Ascending aorta (tissue), 2 donors: ENCODE measurements at regions of chr16 and their contacts with region 1.

Region 1: GRCh38 chr16:88785106-88785924 is at the start of gene PIEZO1:
- DNase-seq: peak in 1 of 2 donors; percentile 88
- H3K4me3 ChIP-seq: peak within 1 kb of the TSS; percentile 93 to 95
- H3K27ac ChIP-seq: peak within 1 kb of the TSS; percentile 90 to 93
- H3K4me1 ChIP-seq: peaks cover 15 to 23% of the 10 kb centered on the region in 2 donors
- H3K27me3 ChIP-seq: no peaks in the 10 kb centered on the region
- CTCF ChIP-seq: peak; percentile 90 to 98 (median 95)
- total RNA-seq, gene PIEZO1: 428 TPM

Region 2: DNA sequence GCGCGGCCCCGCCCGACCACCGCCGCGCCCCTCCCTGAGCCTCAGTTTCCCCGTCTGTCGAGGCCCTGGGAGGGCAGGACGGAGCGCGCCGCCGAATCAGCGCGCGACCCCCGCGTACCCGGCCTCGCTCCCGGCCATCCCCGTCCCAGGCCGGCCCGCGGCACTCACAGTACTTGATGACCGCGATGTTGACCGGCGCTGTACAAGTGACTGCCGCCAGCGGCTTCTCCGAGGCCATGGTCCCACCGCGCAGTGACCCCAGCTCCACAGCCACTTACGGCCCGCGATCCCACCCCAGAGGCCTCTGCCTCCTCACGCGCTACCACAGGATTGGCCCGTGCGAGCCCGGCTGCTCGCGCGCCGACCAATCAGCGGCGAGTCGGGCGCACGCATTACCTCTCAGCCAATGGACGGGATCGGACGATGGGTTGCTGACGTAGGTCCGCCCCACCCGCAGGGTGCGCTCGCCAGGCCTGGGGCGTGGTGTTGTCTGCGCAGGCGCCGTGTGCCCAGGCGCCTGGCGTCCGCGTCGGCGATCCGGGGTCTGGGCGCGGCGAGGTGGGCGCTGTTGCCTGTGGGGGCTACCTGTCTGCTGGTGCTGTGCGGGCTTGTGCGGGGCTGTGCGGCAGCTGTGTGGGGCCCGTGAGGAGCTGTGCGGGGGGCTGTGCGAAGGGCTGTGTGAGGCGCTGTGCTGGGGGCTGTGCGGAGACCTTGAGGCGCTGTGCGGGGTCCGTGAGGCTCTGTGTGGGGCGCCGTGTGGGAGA is 122.3 kb before region 1 on chr16 and contains the start of gene MVD:
- intact Hi-C with region 1: loop called (anchors 1 kb)
- DNase-seq: peak; percentile 93 to 98
- H3K4me3 ChIP-seq: peak within 1 kb of the TSS; percentile 87 to 89
- H3K27ac ChIP-seq: peak within 1 kb of the TSS; percentile 68 to 72
- H3K4me1 ChIP-seq: peaks cover 0 to 11% of the 10 kb centered on the region in 2 donors
- H3K27me3 ChIP-seq: no peaks in the 10 kb centered on the region
- CTCF ChIP-seq: no peak
- total RNA-seq, gene MVD: 72.9 TPM

Region 3: DNA sequence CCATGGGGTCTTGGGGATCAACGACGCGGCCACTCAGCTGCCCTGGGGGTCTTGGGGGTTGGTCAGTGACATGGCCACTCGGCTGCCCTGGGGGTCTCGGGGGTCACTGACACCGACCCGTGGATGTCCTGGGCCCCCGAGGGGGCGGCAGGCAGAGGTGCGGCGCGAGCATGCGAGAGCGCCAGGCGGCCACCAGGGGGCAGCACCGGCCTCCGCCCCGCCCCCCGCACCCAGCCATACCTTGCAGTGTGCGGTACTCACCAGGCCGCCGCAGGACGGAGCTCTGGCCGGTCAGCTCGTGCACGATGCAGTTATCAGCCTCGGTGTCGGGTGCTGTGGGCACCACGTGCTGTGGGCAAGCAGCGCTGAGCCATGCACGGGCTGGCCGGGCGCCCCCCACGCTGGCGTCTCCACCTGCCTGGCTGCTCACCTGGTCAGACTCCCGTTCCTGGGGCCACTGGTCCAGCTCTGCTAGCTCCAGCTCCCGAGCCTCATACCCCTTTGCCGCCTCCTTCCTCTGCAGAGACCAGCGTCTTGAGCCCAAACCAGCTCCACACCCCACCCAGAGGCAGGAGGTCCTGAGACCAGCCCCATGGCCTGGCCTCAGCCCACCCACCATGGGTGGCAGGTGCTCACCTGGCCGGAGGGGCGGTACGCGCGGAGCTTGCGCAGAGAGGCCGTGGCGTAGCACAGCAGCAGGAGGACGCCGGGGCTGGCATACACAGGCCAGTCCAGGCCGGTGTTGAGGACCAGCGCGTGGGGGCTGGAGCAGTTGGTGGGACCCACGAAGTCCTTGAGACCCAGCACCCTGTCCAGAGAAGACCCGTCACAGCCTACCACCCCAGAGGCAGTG is 47.8 kb before region 1 on chr16:
- intact Hi-C with region 1: loop called (anchors 1 kb)
- DNase-seq: peak in 1 of 2 donors; percentile 76
- H3K4me3 ChIP-seq: no peak overlapping the region
- H3K27ac ChIP-seq: no peak overlapping the region
- H3K4me1 ChIP-seq: no peaks in the 10 kb centered on the region
- H3K27me3 ChIP-seq: no peaks in the 10 kb centered on the region
- CTCF ChIP-seq: peak; percentile 98 to 99 (median 99)

Region 4: GRCh38 chr16:88769617-88770460 is 15.5 kb before region 1 on chr16:
- intact Hi-C with region 1: loop called (anchors 2 kb)
- DNase-seq: no peak
- H3K4me3 ChIP-seq: no peak overlapping the region
- H3K27ac ChIP-seq: no peak overlapping the region
- H3K4me1 ChIP-seq: peaks cover 26 to 39% of the 10 kb centered on the region in 2 donors
- H3K27me3 ChIP-seq: no peaks in the 10 kb centered on the region
- CTCF ChIP-seq: no peak

Region 5: DNA sequence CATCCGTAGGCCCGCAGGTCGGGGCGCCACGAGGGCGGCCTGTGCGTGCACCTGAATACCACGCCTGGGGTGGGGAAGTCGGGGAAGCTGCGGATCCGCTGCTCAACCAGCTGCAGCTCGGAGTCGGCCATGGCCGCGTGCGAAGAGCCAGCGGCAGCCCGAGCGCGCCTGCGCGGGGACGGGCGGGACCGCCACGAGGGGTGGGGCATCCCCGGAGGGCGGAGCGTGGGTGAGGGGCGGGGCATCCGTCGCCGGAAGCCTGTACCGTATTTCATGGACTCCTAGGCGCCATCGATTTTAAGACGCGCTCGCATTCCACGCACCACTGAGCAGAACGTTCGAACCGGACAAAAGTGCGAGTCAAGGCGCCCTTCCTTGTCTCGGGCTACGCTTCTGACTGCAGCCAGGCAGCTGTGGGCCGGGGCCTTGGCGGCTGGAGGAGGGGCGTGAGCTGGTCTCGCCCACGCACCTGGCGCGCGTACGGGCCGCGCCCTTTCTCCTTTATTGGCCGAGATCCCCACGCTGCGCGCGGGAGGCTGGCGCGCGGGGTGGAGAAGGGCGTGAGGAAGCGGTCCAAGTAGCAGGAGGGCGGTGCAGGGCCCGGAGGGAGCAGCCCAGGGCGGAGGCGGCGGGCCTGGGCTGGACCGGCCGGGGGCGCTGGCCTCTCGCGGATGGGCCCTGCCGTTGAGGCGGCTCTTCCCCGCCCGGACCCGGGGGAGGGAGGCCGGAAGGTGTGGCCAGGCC is 26.6 kb after region 1 on chr16 and contains the start of gene APRT:
- intact Hi-C with region 1: loop called (anchors 1 kb)
- DNase-seq: peak; percentile 65 to 96
- H3K4me3 ChIP-seq: peak within 1 kb of the TSS; percentile 80 to 83
- H3K27ac ChIP-seq: peak within 1 kb of the TSS; percentile 86 to 93
- H3K4me1 ChIP-seq: peaks cover 8 to 21% of the 10 kb centered on the region in 2 donors
- H3K27me3 ChIP-seq: no peaks in the 10 kb centered on the region
- CTCF ChIP-seq: peak in 2 of 3 experiments; percentile 41 to 44
- total RNA-seq, gene APRT: 305 TPM

Region 6: DNA sequence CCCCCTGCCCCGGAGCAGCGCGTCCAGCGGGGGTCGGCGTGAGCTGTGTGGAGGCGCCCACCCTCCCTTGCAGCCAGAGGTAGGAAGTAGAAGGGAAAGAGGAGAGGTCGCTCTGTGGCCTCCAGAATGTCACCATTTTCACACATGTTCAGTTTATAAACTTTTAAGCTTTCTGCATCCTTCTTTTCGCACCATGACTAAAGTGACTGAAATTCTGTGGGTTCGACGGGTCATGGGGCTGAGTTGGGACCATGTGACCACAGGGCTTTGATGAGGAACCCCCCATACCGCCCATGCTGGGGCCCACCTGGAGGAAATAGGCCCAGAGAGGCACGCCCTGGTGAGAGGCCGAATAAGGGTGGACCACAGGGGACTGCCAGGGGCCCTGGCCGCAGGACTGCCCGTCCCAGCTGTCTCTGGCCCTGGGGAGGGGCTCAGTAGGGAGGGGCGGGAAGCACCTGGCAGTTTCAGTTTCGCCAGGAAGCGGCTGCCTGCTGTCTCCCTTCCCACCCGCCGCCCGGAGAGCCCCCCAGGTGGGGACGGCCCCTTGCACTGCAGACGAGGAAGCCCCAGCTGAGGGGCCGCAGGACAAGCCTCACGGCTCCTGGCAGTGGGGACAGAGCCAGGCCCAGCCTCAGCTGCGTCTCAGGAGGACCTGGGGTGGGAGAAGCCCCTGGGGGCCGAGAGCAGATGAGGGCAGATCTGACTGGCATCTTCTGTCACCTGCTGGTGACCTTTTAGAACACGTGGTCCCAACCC is 182.7 kb after region 1 on chr16:
- intact Hi-C with region 1: no loop called
- DNase-seq: no peak
- H3K4me3 ChIP-seq: no peak overlapping the region
- H3K27ac ChIP-seq: no peak overlapping the region
- H3K4me1 ChIP-seq: no peaks in the 10 kb centered on the region
- H3K27me3 ChIP-seq: no peaks in the 10 kb centered on the region
- CTCF ChIP-seq: no peak